ENCODE measurements at regions of chr13 and their contacts with region 1.

Region 1: GRCh38 chr13:73259061-73260017 is 200.5 kb downstream of the KLF5 start:
- DNase-seq: no peak
- H3K4me3 ChIP-seq: no peak overlapping the region
- H3K4me3 Mint-ChIP-seq: no peak overlapping the region
- H3K27ac ChIP-seq: peak overlapping the region in 1 of 2 donors; percentile 84
- H3K27ac Mint-ChIP-seq: peak overlapping the region in 4 of 7 donors; percentile 12 to 97 (median 58)
- H3K4me1 ChIP-seq: peaks cover 39 to 44% of the 10 kb centered on the region in 2 donors
- H3K4me1 Mint-ChIP-seq: peaks cover 52% of the 10 kb centered on the region
- H3K27me3 ChIP-seq: no peaks in the 10 kb centered on the region
- H3K27me3 Mint-ChIP-seq: no peaks in the 10 kb centered on the region
- CTCF ChIP-seq: no peak

Region 2: DNA sequence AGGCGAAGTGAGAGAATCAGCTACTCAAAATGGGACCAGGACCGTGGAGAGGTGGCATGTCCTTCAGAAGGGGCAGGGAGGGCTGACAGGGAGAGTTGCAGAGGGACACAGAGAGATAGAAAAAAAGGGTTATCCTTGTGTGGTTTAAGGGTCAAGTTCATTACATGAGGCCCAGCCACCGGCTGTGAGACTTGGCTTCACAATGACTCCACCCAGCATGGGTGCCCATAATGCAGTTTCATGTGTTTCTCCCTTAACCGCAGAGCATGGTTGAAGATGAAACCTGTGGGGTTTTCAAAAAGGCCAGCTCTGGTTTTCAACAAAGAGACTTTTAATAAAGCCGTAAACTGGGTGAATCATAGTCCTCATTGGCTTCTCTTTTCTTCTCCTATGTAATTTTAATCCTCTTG is 36.0 kb before region 1 on chr13:
- intact Hi-C with region 1: no loop called
- DNase-seq: no peak
- H3K4me3 ChIP-seq: no peak overlapping the region
- H3K4me3 Mint-ChIP-seq: no peak overlapping the region
- H3K27ac ChIP-seq: no peak overlapping the region
- H3K27ac Mint-ChIP-seq: peak overlapping the region in 3 of 7 donors; percentile 79 to 91 (median 89)
- H3K4me1 ChIP-seq: peaks cover 13 to 19% of the 10 kb centered on the region in 2 donors
- H3K4me1 Mint-ChIP-seq: peaks cover 32% of the 10 kb centered on the region
- H3K27me3 ChIP-seq: no peaks in the 10 kb centered on the region
- H3K27me3 Mint-ChIP-seq: peaks cover 0 to 5% (median 4%) of the 10 kb centered on the region in 3 donors
- CTCF ChIP-seq: no peak

Region 3: GRCh38 chr13:73335221-73335620 is 75.9 kb after region 1 on chr13:
- intact Hi-C with region 1: loop called in 1 of 2 experiments (anchors 10 kb)
- DNase-seq: peak; percentile 42 to 76 (median 69)
- H3K4me3 ChIP-seq: peak overlapping the region in 1 of 3 experiments; percentile 15
- H3K4me3 Mint-ChIP-seq: peak overlapping the region in 1 of 2 donors; percentile 30
- H3K27ac ChIP-seq: peak overlapping the region in 1 of 2 donors; percentile 86
- H3K27ac Mint-ChIP-seq: peak overlapping the region; percentile 58 to 96 (median 87)
- H3K4me1 ChIP-seq: peaks cover 2 to 28% of the 10 kb centered on the region in 2 donors
- H3K4me1 Mint-ChIP-seq: peaks cover 31% of the 10 kb centered on the region
- H3K27me3 ChIP-seq: no peaks in the 10 kb centered on the region
- H3K27me3 Mint-ChIP-seq: no peaks in the 10 kb centered on the region
- CTCF ChIP-seq: no peak

Region 4: GRCh38 chr13:73687087-73687486 is 427.7 kb after region 1 on chr13:
- intact Hi-C with region 1: no loop called
- DNase-seq: no peak
- H3K4me3 ChIP-seq: no peak overlapping the region
- H3K4me3 Mint-ChIP-seq: no peak overlapping the region
- H3K27ac ChIP-seq: no peak overlapping the region
- H3K27ac Mint-ChIP-seq: no peak overlapping the region
- H3K4me1 ChIP-seq: no peaks in the 10 kb centered on the region
- H3K4me1 Mint-ChIP-seq: no peaks in the 10 kb centered on the region
- H3K27me3 ChIP-seq: no peaks in the 10 kb centered on the region
- H3K27me3 Mint-ChIP-seq: no peaks in the 10 kb centered on the region
- CTCF ChIP-seq: no peak